ENCODE measurements at regions of chr13 and their contacts with region 1.

Region 1: DNA sequence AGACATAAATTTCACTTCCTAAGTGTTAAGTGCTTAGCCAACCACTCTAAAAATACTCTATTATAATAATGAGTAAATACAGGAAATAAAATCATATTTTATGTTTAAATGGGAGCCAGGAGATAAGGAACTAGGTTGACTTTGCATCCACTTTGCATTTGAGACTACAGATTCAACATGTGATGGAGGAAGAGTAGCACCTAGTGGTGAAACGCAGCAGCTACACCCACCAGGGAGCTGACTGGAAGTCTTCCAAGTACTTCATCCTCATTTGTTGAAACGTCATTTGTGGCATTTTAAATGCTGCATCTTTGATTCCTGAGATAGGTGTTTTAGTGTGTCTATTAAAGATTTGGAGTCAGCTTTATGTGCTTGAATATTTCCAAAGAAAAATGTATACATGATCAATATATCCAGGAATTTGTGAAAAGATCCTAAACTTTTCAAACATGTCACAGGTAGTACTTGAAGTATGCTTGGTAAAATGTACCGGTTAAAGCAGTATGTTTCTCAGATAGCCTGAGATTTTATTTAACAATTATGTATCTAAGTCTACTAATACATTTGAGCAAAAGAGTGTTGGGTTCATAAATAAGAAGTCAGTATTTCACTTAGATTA is 17.4 kb upstream of the KCTD12 start:
- DNase-seq: peak; percentile 78
- ATAC-seq: peak; percentile 75
- H3K4me3 Mint-ChIP-seq: no peak overlapping the region
- H3K27ac Mint-ChIP-seq: no peak overlapping the region
- H3K4me1 Mint-ChIP-seq: no peaks in the 10 kb centered on the region
- H3K27me3 Mint-ChIP-seq: peaks cover 57% of the 10 kb centered on the region

Region 2: DNA sequence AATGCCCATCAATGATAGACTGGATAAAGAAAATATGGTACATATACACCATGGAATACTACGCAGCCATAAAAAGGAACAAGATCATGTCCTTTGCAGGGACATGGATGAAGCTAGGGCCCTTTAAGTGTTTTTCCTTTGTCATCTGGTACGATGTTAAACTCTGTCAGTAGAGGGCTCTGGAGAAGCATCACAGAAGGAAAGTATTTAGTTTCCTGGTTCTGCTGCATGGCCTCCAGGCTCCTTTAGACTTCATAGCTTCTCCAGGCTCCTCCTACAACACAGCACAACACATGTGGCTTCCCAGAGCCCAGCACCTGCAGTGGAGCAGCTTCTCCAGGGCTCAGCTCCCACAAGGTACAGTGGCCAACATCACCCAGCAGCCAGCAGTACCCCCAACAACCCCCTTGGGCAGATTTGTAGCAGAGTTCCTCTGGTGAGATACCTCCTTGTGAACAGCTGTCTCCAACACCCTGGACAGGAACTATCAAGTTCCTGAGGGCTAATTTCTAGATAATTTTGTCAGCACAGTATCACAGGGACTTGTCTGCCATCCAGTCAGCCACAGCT is 80.9 kb before region 1 on chr13:
- CTCF ChIA-PET with region 1: interaction called, 16 read pairs
- DNase-seq: no peak
- ATAC-seq: peak; percentile 30
- H3K4me3 Mint-ChIP-seq: no peak overlapping the region
- H3K27ac Mint-ChIP-seq: no peak overlapping the region
- H3K4me1 Mint-ChIP-seq: no peaks in the 10 kb centered on the region
- H3K27me3 Mint-ChIP-seq: peaks cover 13% of the 10 kb centered on the region

Region 3: GRCh38 chr13:76854894-76855293 is 48.8 kb before region 1 on chr13:
- CTCF ChIA-PET with region 1: no interaction called
- DNase-seq: no peak
- ATAC-seq: no peak
- H3K4me3 Mint-ChIP-seq: no peak overlapping the region
- H3K27ac Mint-ChIP-seq: no peak overlapping the region
- H3K4me1 Mint-ChIP-seq: peaks cover 2% of the 10 kb centered on the region
- H3K27me3 Mint-ChIP-seq: peaks cover 7% of the 10 kb centered on the region

Region 4: GRCh38 chr13:76886292-76887075 is 17.2 kb before region 1 on chr13 and contains the start of gene KCTD12:
- CTCF ChIA-PET with region 1: interaction called, 14 read pairs
- DNase-seq: peak; percentile 72
- ATAC-seq: peak; percentile 80
- H3K4me3 Mint-ChIP-seq: peak within 1 kb of the TSS; percentile 79
- H3K27ac Mint-ChIP-seq: peak within 1 kb of the TSS; percentile 50
- H3K4me1 Mint-ChIP-seq: peaks cover 20% of the 10 kb centered on the region
- H3K27me3 Mint-ChIP-seq: peaks cover 72% of the 10 kb centered on the region
- total RNA-seq, gene KCTD12: 2.4 to 3.7 TPM

Measured in activated CD8-positive, alpha-beta memory T cell treated with anti-CD3 and anti-CD28 coated beads, Interleukin-2, amount 10 ng/mL, durations not matched to agents 7 days and 5 days (primary cell).